Transverse colon (tissue), 4 donors: ENCODE measurements at regions of chr12 and their contacts with region 1.

Region 1: DNA sequence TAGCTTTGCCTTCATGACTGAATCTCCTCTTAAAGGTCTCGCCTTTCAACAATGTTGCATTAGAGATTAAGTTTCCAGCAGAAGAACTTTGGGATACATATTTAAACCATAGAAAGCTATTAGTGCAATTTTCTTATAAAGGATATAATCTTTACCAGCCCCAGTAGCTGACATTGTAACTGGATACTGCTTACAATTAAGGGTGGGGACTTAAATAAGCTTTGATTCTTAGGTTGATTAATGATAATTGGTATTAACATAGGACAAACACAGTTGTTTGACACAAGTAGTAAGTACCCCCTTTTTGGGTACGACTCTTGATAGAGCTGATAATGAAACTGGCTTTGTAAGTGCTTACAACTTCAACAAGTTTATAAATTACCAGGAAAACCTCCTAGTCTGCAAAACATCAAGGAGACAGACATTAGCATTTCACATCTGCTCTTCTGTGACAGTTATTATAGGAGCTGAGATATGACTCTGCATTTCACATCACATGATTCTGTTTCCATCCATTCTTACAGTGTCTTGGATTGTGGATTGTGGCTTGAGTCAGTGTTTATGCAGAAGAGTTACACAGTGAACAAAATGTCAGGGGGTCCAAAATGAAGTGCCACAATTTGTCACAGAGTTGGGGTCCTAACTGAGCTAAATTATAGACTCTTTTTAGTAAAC is 249.1 kb upstream of the E2F7 start:
- DNase-seq: no peak
- H3K4me3 ChIP-seq: no peak overlapping the region
- H3K27ac ChIP-seq: no peak overlapping the region
- H3K4me1 ChIP-seq: no peaks in the 10 kb centered on the region
- H3K27me3 ChIP-seq: no peaks in the 10 kb centered on the region
- CTCF ChIP-seq: no peak
- EP300 ChIP-seq: no peak
- POLR2A ChIP-seq: no peak

Region 2: GRCh38 chr12:76664731-76665130 is 649.8 kb before region 1 on chr12:
- in situ Hi-C with region 1: no loop called
- intact Hi-C with region 1: loop called (anchors 5 kb)
- DNase-seq: no peak
- H3K4me3 ChIP-seq: no peak overlapping the region
- H3K27ac ChIP-seq: no peak overlapping the region
- H3K4me1 ChIP-seq: peaks cover 0 to 13% (median 4%) of the 10 kb centered on the region in 4 donors
- H3K27me3 ChIP-seq: no peaks in the 10 kb centered on the region
- CTCF ChIP-seq: no peak
- EP300 ChIP-seq: no peak
- POLR2A ChIP-seq: no peak